HepG2 (cell line): ENCODE measurements at regions of chr1 and their contacts with region 1.

Region 1: DNA sequence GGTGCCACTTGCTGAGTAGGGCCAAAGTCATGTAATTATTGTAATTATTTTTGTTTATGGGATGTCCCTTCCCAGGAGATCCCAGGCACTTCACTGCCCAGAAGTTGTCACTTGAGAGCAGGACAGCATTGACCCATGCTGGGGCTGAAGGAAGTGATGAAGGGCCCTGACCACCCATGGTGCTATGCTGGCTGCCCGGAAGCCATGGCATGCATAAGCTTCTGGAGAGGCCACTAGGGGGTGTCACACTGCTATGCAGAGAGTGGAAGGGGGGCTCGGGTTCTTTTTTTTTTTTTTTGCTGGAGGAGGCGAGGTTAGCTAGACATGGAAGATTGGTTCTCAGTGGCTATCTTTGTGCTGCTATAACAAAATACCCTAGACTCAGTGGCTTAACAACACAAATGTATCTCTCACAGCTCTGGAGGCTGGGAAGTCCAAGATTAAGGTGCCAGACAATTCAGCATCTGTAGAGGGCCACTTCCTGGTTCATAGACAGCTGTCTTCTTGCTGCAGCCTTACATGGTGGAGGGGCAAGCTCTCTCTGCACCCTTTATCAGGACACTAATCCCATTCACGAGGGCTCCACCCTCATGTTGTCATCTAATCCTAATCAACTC is 84.9 kb downstream of the CNIH3 start:
- DNase-seq: peak; percentile 19
- ATAC-seq: peak; percentile 84
- H3K4me3 ChIP-seq: no peak overlapping the region
- H3K27ac ChIP-seq: no peak overlapping the region
- H3K4me1 ChIP-seq: no peaks in the 10 kb centered on the region
- H3K27me3 ChIP-seq: no peaks in the 10 kb centered on the region; a peak in 1 of 5 replicates
- CTCF ChIP-seq: peak; percentile 56
- EP300 ChIP-seq: no peak
- POLR2A ChIP-seq: no peak
- RAD21 ChIP-seq: no peak

Region 2: GRCh38 chr1:224851210-224851847 is 150.3 kb after region 1 on chr1:
- CTCF ChIA-PET with region 1: interaction called, 6 read pairs
- POLR2A ChIA-PET with region 1: no interaction called
- in situ Hi-C with region 1: no loop called
- intact Hi-C with region 1: loop called (anchors 1 kb)
- DNase-seq: peak; percentile 9
- ATAC-seq: peak; percentile 84
- H3K4me3 ChIP-seq: no peak overlapping the region
- H3K27ac ChIP-seq: no peak overlapping the region
- H3K4me1 ChIP-seq: no peaks in the 10 kb centered on the region
- H3K27me3 ChIP-seq: no peaks in the 10 kb centered on the region
- CTCF ChIP-seq: peak; percentile 71
- EP300 ChIP-seq: no peak
- POLR2A ChIP-seq: no peak
- RAD21 ChIP-seq: no peak